Calu3 (cell line): ENCODE measurements at regions of chr3 and their contacts with region 1.

Region 1: DNA sequence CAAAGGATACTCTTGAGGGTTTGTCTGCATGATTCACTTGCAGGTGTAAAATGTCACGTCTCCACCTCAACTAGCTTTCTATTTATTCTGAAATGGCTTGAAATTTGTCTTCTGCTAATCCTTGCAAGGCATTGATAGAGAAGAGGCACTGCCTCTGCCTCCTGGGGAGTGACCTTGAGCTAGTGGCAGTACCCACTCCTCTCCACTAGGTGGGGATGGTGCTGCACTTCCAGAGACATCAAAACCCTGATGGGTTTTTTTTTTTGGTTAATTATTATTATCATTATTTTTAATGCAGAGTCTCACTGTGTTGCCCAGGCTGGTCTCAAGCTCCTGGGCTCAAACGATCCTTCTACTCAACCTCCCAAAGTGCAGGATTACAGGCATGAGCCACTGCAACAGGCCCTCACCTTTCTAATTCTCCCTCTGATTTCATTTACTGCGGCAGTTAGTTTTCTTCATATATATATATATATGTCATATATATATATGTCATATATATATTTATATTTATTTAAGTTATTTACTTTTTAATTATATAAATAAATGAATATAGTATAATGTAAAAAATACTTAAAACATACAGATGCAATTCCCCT is 117.6 kb upstream of the EIF1B start:
- DNase-seq: peak; percentile 75
- H3K4me3 Mint-ChIP-seq: no peak overlapping the region
- H3K27ac Mint-ChIP-seq: no peak overlapping the region
- H3K4me1 Mint-ChIP-seq: no peaks in the 10 kb centered on the region
- H3K27me3 Mint-ChIP-seq: no peaks in the 10 kb centered on the region
- CTCF ChIP-seq: peak; percentile 89

Region 2: DNA sequence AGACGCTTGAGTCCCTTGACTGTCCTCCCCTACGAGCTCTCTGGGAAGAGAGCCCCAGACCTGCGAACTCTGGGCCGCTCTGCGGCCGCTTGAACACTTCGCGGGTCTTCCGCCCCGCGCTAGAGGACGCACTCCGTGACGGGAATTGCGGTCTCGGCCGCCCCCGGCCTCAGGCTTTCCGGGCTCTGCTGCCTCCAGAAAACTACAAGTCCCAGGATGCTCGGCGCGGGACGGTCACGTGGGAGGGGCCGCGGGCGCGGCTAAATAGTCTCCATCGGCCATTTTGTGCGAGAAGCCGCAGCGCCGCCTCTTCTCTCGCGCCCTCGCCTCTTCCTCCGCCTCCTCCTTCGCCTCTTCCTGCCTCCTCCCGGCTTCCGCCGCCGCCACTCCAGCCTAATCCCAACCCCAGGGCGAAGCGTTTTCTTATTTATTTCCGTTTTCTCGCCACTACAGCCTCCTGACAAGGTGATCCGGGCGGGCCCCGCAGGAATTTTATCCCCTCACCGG is 117.5 kb after region 1 on chr3 and contains the start of gene EIF1B:
- CTCF ChIA-PET with region 1: interaction called, 15 read pairs
- intact Hi-C with region 1: no loop called
- DNase-seq: peak; percentile 98
- H3K4me3 Mint-ChIP-seq: peak within 1 kb of the TSS; percentile 93
- H3K27ac Mint-ChIP-seq: peak within 1 kb of the TSS; percentile 94
- H3K4me1 Mint-ChIP-seq: peaks cover 6% of the 10 kb centered on the region
- H3K27me3 Mint-ChIP-seq: no peaks in the 10 kb centered on the region
- CTCF ChIP-seq: peak; percentile 60
- total RNA-seq, gene EIF1B: 37.2 and 41.3 TPM in 2 replicates

Region 3: DNA sequence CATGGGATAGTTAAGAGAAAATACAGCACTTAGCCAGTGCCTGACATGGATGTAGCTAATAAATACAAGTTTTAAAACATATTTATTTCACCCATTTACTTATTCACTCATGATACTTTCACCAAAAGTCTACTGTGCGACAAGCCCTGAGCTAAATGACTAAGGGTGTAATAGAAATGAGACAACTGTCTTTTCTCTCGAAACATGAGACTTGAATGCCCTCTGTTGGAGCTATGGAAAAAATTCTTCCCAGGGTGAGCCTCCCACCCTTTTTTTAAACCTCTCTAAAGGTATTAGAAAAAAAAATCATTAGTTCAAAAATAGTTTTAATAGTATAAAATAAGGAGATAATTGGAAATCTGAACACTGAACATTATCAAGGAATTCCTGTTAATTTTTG is 240.8 kb after region 1 on chr3:
- CTCF ChIA-PET with region 1: no interaction called
- intact Hi-C with region 1: loop called (anchors 10 kb)
- DNase-seq: no peak
- H3K4me3 Mint-ChIP-seq: no peak overlapping the region
- H3K27ac Mint-ChIP-seq: no peak overlapping the region
- H3K4me1 Mint-ChIP-seq: no peaks in the 10 kb centered on the region
- H3K27me3 Mint-ChIP-seq: no peaks in the 10 kb centered on the region
- CTCF ChIP-seq: no peak